ENCODE measurements at regions of chr4 and their contacts with region 1.

Region 1: GRCh38 chr4:173301518-173302201 is 32.5 kb downstream of the HMGB2 start:
- DNase-seq: no peak
- H3K4me3 ChIP-seq: no peak overlapping the region
- H3K27ac ChIP-seq: no peak overlapping the region
- H3K4me1 ChIP-seq: no peaks in the 10 kb centered on the region; a peak in 1 of 7 replicates
- H3K27me3 ChIP-seq: no peaks in the 10 kb centered on the region
- CTCF ChIP-seq: peak in 2 of 3 experiments; percentile 32 to 62; a peak in 2 of 4 replicates
- EP300 ChIP-seq: no peak
- POLR2A ChIP-seq: no peak
- RAD21 ChIP-seq: peak; percentile 57 to 60

Region 2: DNA sequence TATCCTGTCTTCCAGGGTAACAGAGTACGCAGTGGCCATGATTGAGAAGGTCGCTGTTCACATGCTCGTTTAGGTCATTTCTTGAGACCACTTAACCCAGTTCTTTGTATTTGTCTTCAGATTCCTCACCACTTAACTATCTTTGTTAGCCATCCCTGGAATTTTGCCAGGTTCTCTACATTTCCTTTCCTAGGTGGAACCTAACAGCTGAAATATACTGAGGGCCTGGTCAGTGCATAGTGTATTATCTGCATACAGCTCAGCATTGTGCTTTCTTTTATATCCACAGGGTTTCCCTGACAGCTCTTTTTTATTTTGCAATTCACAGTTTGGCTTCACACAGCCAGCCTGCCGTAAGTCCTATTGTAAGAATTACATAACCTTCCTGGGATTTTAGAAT is 281.9 kb before region 1 on chr4:
- CTCF ChIA-PET with region 1: interaction called, 31 read pairs
- POLR2A ChIA-PET with region 1: no interaction called
- DNase-seq: no peak
- H3K4me3 ChIP-seq: no peak overlapping the region
- H3K27ac ChIP-seq: no peak overlapping the region
- H3K4me1 ChIP-seq: peaks cover 2 to 4% (median 3%) of the 10 kb centered on the region in 4 experiments; a peak in 3 of 7 replicates
- H3K27me3 ChIP-seq: no peaks in the 10 kb centered on the region
- CTCF ChIP-seq: no peak
- EP300 ChIP-seq: no peak
- POLR2A ChIP-seq: no peak
- RAD21 ChIP-seq: no peak

Region 3: GRCh38 chr4:173257732-173258717 is 43.6 kb before region 1 on chr4:
- CTCF ChIA-PET with region 1: interaction called, 13 read pairs
- POLR2A ChIA-PET with region 1: no interaction called
- DNase-seq: peak in 1 of 2 experiments; percentile 31
- H3K4me3 ChIP-seq: no peak overlapping the region
- H3K27ac ChIP-seq: no peak overlapping the region
- H3K4me1 ChIP-seq: peaks cover 0 to 6% (median 4%) of the 10 kb centered on the region in 4 experiments; a peak in 2 of 7 replicates
- H3K27me3 ChIP-seq: no peaks in the 10 kb centered on the region
- CTCF ChIP-seq: peak; percentile 79 to 89 (median 79)
- EP300 ChIP-seq: no peak
- POLR2A ChIP-seq: no peak
- RAD21 ChIP-seq: peak; percentile 97 to 99

Region 4: GRCh38 chr4:173270312-173271027 is 31.2 kb before region 1 on chr4:
- CTCF ChIA-PET with region 1: interaction called, 62 read pairs
- POLR2A ChIA-PET with region 1: no interaction called
- DNase-seq: no peak
- H3K4me3 ChIP-seq: no peak overlapping the region
- H3K27ac ChIP-seq: no peak overlapping the region
- H3K4me1 ChIP-seq: peaks cover 0 to 5% (median 1%) of the 10 kb centered on the region in 4 experiments; a peak in 3 of 7 replicates
- H3K27me3 ChIP-seq: no peaks in the 10 kb centered on the region; a peak in 1 of 7 replicates
- CTCF ChIP-seq: no peak
- EP300 ChIP-seq: no peak
- POLR2A ChIP-seq: no peak
- RAD21 ChIP-seq: no peak

Region 5: DNA sequence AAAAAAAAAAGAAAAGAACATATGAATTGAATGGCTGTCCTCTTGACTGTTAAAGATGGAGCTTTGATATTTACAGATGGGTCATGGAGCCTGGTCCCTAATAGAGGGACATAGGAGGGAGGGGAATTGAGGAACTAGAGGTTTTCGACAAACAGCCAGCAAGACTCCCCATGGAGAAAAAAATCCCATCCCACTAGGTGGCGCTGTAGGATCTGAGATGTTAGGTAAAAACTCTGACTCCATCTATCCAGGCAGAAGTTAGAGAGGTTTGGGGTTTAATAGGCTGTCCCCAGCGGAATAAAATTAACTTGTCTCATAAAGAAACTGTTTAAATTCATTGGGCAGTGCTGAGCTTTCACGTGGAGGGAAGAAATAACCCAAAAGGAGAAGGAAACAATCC is 13.4 kb before region 1 on chr4:
- CTCF ChIA-PET with region 1: interaction called, 62 read pairs
- POLR2A ChIA-PET with region 1: no interaction called
- DNase-seq: peak; percentile 31 to 91
- H3K4me3 ChIP-seq: no peak overlapping the region
- H3K27ac ChIP-seq: no peak overlapping the region
- H3K4me1 ChIP-seq: 0 out of 7 replicates have a peak, but pooled peaks cover 0 to 1% (median 0%) of the 10 kb centered on the region in 4 experiments
- H3K27me3 ChIP-seq: peaks cover 0 to 1% (median 0%) of the 10 kb centered on the region in 4 experiments; a peak in 1 of 7 replicates
- CTCF ChIP-seq: peak; percentile 19 to 73 (median 68)
- EP300 ChIP-seq: no peak
- POLR2A ChIP-seq: no peak
- RAD21 ChIP-seq: peak; percentile 66 to 72

Region 6: GRCh38 chr4:173346074-173346473 is 44.4 kb after region 1 on chr4:
- CTCF ChIA-PET with region 1: interaction called, 16 read pairs
- POLR2A ChIA-PET with region 1: no interaction called
- DNase-seq: no peak
- H3K4me3 ChIP-seq: no peak overlapping the region
- H3K27ac ChIP-seq: no peak overlapping the region
- H3K4me1 ChIP-seq: peaks cover 0 to 9% (median 3%) of the 10 kb centered on the region in 4 experiments; a peak in 3 of 7 replicates
- H3K27me3 ChIP-seq: no peaks in the 10 kb centered on the region
- CTCF ChIP-seq: no peak
- EP300 ChIP-seq: no peak
- POLR2A ChIP-seq: no peak
- RAD21 ChIP-seq: no peak